Tibial artery (tissue), 4 donors: ENCODE measurements at regions of chr12 and their contacts with region 1.

Region 1: DNA sequence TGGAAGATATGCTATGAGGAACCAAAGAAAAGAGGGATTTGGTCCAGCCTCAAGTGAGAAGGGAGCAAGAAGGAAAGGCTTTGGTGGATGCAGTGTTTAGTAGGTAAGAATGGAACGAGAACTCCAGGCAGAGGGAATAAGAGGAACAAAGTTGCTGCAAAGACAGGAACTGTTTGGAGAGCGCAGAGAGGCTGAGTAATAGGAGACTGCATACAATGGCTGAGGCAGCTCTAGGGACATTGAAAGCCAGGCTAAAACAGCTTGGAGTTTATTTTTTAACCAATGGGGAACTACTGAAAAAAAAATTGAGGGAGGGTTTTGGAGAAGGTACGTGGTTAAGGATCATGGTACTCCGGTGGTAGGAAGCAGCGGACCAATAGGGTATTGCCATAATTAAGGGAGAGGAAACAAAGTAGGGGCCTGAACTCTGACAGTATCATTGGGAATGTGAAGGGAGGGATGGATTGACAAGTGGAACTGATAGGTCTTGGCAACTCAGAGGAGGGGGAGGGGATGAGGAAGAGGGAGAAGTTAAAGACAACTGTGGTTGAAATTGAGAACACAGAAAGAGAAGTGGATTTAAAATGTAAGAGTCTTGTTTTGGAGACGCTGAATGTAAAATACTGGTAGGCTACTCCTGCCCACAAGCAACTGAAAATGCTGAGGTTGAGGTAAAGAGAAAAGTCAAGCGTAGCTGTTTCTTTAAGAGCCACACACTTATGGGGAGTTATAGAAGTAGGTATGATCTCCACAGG is 4.8 kb downstream of the ASCL4 start:
- DNase-seq: no peak
- H3K4me3 ChIP-seq: no peak overlapping the region
- H3K27ac ChIP-seq: no peak overlapping the region
- H3K4me1 ChIP-seq: peaks cover 0 to 8% (median 6%) of the 10 kb centered on the region in 4 donors
- H3K27me3 ChIP-seq: peaks cover 0 to 32% of the 10 kb centered on the region in 2 donors
- CTCF ChIP-seq: no peak

Region 2: GRCh38 chr12:106581543-106582248 is 1197.6 kb before region 1 on chr12:
- intact Hi-C with region 1: loop called (anchors 10 kb)
- DNase-seq: no peak
- H3K4me3 ChIP-seq: peak overlapping the region in 1 of 2 donors; percentile 40
- H3K27ac ChIP-seq: no peak overlapping the region
- H3K4me1 ChIP-seq: peaks cover 0 to 64% (median 55%) of the 10 kb centered on the region in 4 donors
- H3K27me3 ChIP-seq: peaks cover 5 to 90% of the 10 kb centered on the region in 2 donors
- CTCF ChIP-seq: no peak

Region 3: GRCh38 chr12:108507971-108508642 is 728.9 kb after region 1 on chr12:
- intact Hi-C with region 1: loop called (anchors 10 kb)
- DNase-seq: no peak
- H3K4me3 ChIP-seq: no peak overlapping the region
- H3K27ac ChIP-seq: no peak overlapping the region
- H3K4me1 ChIP-seq: peaks cover 0 to 4% (median 2%) of the 10 kb centered on the region in 4 donors
- H3K27me3 ChIP-seq: peaks cover 0 to 7% of the 10 kb centered on the region in 2 donors
- CTCF ChIP-seq: no peak